Transverse colon (tissue), 4 donors: ENCODE measurements at regions of chr14 and their contacts with region 1.

Region 1: GRCh38 chr14:88023658-88024187 is 18.8 kb downstream of the GPR65 start:
- DNase-seq: no peak
- H3K4me3 ChIP-seq: no peak overlapping the region
- H3K27ac ChIP-seq: no peak overlapping the region
- H3K4me1 ChIP-seq: peaks cover 0 to 23% (median 5%) of the 10 kb centered on the region in 4 donors
- H3K27me3 ChIP-seq: no peaks in the 10 kb centered on the region
- CTCF ChIP-seq: no peak
- EP300 ChIP-seq: no peak
- POLR2A ChIP-seq: no peak

Region 2: GRCh38 chr14:88154321-88154720 is 130.6 kb after region 1 on chr14:
- in situ Hi-C with region 1: loop called in 1 of 4 experiments (anchors 10 kb)
- intact Hi-C with region 1: no loop called
- DNase-seq: no peak
- H3K4me3 ChIP-seq: no peak overlapping the region
- H3K27ac ChIP-seq: no peak overlapping the region
- H3K4me1 ChIP-seq: no peaks in the 10 kb centered on the region
- H3K27me3 ChIP-seq: no peaks in the 10 kb centered on the region
- CTCF ChIP-seq: no peak
- EP300 ChIP-seq: no peak
- POLR2A ChIP-seq: no peak